ENCODE measurements at regions of chr10 and their contacts with region 1.

Region 1: GRCh38 chr10:102752934-102753664 is 9.4 kb downstream of the WBP1L start:
- DNase-seq: peak; percentile 36
- CTCF ChIP-seq: peak; percentile 53

Region 2: DNA sequence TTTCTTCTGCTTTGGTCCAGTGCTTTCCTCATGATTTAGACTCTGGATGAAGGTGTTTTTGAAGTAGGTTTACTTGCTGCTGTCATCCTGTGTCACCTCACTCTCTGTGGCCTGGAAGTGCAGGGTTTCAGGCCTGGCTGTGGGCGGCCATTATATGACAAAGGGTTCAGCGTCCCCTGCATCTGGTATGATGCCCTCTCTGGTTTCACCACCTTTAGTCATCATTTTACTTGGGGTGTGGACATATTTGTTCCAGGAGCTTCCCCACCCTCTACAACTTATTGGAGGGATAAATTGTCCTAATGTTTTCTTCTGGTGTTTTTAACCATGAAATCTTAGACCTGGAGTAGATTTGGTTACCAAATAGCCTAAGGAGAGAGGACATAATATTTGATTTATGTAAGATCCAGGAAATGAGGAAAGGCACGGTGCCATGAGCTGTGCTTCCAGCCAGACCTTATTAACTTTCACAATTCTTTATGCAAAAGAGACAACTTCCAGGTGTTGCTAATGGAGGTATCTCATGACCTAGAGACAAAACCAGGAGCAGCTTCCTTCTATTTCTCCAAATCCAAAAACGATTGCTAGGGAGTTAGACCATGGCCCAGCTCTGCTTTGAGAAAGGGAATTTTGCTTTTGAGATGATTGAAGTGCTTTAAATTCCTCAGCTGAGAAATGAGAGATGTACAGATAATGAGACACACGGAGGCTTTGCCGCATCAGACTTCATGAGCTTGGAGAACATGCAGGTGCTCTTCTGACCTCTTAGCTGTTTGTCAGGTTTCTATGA is 11.5 kb after region 1 on chr10:
- CTCF ChIA-PET with region 1: interaction called, 41 read pairs
- POLR2A ChIA-PET with region 1: no interaction called
- DNase-seq: no peak
- CTCF ChIP-seq: no peak

Region 3: DNA sequence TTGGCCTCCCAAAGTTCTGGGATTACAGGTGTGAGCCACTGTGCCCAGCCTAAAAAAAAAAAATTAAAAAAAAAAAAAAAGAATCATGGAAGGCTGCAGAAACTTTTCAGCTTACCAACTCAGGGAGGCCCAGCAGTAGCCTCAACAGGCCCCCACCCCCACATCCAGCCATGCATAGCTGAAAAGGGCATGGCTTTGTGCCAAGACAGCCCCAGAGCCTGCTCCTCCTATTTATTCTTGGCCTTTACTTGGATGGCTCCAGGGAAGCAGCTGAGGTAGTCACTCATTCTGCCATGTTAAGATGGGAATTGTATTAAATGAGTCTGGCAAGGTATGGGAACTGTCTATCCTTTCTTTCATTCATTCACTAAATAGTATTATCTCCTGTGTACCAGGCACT is 151.2 kb after region 1 on chr10:
- CTCF ChIA-PET with region 1: interaction called, 11 read pairs
- POLR2A ChIA-PET with region 1: no interaction called
- DNase-seq: no peak
- CTCF ChIP-seq: no peak

Region 4: DNA sequence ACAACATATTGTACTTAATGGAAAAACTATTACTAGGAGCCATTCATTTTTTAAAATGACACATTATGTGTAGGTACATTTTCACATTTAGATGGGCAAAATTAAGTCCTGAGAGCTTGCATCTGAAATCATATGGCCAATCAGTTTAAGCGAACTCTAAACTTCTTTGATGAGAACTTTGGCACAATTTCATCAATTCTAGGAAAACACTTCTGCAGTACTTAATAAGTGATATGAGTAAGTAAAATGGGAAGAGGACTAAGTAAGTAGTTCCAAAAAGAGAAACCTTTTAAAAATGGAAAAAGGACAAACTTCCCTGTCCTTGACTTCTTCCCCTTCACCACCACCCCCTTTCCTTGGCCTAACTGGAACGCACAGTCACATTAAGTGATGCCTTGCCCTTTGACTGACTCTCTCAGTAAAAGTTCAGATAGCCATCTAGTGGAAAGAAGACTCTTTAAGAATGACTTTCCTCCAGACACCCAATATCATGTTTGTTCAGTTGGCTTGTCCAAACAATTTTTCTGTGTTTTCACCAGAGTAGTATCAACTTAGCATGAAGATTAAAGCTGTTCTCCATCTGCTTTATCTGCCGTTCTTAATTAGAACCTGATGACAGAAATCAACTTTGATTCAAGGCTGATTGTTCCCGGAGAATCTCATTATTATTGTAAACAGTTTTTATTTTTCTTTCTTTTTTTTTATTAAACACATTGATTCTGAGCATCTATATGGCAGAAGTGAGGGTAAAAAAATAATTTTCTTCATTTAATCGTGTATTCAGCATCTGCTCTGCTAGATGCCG is 210.1 kb after region 1 on chr10:
- CTCF ChIA-PET with region 1: no interaction called
- POLR2A ChIA-PET with region 1: no interaction called
- DNase-seq: no peak
- CTCF ChIP-seq: no peak

Region 5: DNA sequence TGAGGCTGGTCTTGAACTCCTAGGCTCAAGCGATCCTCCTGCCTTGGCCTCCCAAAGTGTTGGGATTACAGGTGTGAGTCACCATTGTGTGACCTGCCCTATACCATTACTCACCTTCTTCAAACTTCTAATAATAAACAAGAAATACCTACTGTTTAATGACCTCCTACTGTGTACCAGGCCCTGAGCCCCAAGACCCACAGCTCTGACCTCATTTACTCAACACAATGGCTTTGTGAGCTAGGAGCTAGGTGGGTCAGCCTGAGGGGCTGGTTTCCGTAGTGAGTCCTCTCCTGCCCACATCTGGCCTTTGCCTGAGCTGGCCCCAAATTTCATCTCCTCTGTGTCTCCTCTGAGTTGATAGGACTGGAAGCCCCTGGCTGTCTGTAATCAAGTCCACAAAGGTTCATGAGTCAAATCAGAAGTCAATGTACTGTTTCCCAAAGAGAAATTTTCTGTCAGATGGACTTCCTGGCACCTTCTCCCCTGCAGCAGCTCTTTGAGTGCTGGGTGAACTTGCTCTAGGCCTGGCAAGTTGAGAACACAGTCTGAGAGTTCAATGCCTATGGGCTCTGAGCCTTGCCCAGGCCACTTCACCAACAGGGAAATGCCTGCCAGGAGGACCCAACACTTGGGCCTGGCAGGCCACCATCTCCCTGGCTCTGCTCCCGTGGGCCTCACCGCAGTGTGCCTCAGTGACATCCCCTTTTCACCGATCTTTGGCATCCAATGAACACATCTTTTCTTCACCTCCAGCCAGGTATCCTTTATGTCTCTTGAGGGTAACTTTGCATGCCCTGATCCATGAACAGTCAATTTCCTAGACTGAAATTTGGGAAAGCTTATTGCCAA is 764.4 kb after region 1 on chr10:
- CTCF ChIA-PET with region 1: no interaction called
- POLR2A ChIA-PET with region 1: no interaction called
- DNase-seq: peak; percentile 23
- CTCF ChIP-seq: no peak